Activated CD4-positive, alpha-beta memory T cell treated with anti-CD3 and anti-CD28 coated beads, Interleukin-2, amount 10 ng/mL, durations not matched to agents 7 days and 5 days (primary cell): ENCODE measurements at regions of chr19 and their contacts with region 1.

Region 1: GRCh38 chr19:44723952-44724319 is 24.6 kb upstream of the BCL3 start:
- DNase-seq: peak; percentile 85
- H3K4me3 Mint-ChIP-seq: peak overlapping the region; percentile 18
- H3K27ac Mint-ChIP-seq: no peak overlapping the region
- H3K4me1 Mint-ChIP-seq: peaks cover 58% of the 10 kb centered on the region
- H3K27me3 Mint-ChIP-seq: no peaks in the 10 kb centered on the region

Region 2: DNA sequence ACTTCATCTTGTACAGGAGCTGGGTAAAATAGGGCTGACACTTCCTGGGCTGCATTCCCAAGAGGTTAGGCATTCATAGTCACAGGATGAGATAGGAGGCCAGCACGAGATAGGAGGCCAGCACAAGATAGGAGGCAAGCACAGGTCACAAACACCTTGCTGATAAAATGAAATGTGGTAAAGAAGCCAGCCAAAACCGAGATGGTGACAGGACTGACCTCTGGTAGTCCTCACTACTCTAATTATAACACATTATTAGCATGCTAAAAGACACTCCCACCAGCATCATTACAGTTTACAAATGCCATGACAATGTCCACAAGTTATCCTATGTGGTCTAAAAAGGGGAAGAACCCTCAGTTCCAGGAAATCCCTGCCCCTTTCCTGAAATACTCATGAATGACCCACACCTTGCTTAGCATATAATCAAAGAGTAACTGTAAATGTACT is 131.5 kb before region 1 on chr19:
- CTCF ChIA-PET with region 1: no interaction called
- POLR2A ChIA-PET with region 1: no interaction called
- DNase-seq: no peak
- H3K4me3 Mint-ChIP-seq: no peak overlapping the region
- H3K27ac Mint-ChIP-seq: no peak overlapping the region
- H3K4me1 Mint-ChIP-seq: peaks cover 7% of the 10 kb centered on the region
- H3K27me3 Mint-ChIP-seq: no peaks in the 10 kb centered on the region

Region 3: DNA sequence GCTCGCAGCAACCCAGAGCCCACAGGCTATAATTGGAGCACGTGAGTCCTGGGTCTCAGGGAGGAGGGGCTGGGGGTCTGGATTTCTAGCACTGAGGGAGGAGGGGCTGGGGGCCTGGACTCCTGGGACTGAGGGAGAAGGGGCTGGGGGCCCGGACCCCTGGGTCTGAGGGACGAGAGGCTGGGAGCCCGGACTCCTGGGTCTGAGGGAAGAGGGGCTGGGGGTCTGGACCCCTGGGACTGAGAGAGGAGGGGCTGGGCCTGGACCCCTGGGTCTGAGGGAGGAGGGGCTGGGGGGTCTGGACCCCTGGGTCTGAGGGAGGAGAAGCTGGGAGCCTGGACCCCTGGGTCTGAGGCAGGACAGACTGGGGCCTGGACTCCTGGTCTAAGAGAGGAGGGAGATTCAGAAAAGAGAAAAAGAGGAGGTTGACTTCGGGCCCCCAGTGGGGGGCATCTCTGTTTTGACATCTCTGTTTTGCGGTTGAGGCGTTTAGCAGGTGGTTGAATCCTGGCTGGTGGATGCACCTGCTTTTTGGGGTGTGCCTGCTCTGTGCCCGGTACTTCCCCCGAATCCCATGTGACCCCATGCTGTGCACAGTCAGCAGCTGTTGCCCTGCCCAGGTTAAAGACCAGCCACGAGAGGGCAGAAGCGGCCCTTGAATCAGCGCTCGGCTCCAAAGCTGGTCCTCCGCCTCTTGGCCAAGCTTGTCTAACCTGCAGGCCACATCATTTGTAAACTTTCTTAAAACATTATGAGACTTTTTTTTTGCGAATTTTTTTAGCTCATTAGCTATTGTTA is 69.8 kb before region 1 on chr19:
- CTCF ChIA-PET with region 1: interaction called, 11 read pairs
- POLR2A ChIA-PET with region 1: no interaction called
- DNase-seq: peak; percentile 80
- H3K4me3 Mint-ChIP-seq: no peak overlapping the region
- H3K27ac Mint-ChIP-seq: no peak overlapping the region
- H3K4me1 Mint-ChIP-seq: peaks cover 5% of the 10 kb centered on the region
- H3K27me3 Mint-ChIP-seq: no peaks in the 10 kb centered on the region

Region 4: GRCh38 chr19:44712864-44713515 is 10.9 kb before region 1 on chr19:
- CTCF ChIA-PET with region 1: interaction called, 13 read pairs
- POLR2A ChIA-PET with region 1: interaction called, 4 read pairs
- DNase-seq: no peak
- H3K4me3 Mint-ChIP-seq: no peak overlapping the region
- H3K27ac Mint-ChIP-seq: no peak overlapping the region
- H3K4me1 Mint-ChIP-seq: peaks cover 4% of the 10 kb centered on the region
- H3K27me3 Mint-ChIP-seq: peaks cover 2% of the 10 kb centered on the region

Region 5: DNA sequence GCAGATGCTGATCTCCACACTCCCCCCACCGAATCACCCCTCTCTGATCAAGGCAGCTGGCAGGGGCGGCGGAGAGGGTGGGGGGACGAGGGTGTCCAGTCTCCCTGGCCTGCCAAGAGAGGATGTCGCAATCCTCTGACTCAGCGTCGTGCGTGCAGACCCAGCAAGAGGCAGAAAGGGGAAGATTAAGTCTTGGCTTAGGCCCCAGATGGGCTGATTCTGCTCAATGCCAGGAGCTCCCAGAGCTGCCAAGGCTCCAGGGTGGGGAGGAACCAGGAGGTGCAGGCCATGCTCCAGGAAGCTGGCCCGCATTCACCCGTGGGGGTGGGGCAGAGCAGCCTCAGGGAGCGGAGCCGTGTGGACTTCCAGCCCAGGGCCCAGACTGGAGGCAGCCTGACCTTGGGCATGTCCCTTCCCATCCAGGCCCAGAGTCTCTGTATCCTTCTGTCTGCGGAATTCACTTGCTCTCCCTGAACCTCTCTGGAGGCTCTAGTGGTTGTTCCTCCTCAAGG is 18.0 kb after region 1 on chr19:
- CTCF ChIA-PET with region 1: interaction called, 17 read pairs
- POLR2A ChIA-PET with region 1: interaction called, 4 read pairs
- DNase-seq: peak; percentile 35
- H3K4me3 Mint-ChIP-seq: no peak overlapping the region
- H3K27ac Mint-ChIP-seq: peak overlapping the region; percentile 16
- H3K4me1 Mint-ChIP-seq: peaks cover 47% of the 10 kb centered on the region
- H3K27me3 Mint-ChIP-seq: peaks cover 4% of the 10 kb centered on the region

Region 6: DNA sequence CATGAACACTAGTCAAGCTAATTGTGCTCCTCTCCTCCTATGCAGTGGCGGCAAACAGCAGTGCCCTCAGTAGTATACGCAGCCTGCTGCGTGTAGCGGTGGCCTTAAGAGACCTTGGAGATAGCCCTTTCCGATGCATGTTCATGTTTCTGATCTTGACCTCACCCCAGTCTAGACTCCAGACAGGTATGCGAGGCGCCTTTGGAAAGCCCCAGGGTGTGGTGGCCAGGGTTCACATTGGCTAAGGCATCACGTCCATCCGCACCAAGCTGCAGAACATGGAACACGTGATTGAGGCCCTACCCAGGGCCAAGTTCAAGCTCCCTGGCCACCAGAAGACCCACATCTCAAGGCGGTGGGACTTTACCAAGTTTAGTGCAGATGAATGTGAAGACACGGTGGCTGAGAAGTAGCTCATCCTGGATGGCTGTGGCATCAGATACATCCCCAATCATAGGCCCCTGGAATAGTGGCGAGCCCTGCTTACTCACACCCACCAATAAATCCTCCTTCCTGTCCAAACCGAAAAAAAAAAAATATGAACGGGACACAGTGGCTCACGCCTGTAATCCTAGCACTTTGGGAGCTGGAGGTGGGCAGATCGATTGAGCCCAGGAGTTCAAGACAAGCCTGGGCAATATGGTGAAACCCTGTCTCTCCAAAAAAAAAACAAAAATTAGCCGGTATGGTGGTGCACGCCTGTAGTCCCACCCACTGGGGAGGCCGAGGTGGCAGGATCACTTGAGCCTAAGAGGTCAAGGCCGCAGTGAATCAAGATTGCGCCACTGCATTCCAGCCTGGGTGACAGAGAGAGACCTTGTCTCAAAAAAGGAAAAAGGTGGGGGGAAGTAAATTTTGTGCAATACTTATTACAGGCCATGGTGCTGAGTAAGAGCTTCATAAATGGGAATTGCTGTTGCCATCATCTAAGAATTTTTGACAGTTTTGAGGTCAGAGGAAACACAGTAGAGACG is 41.3 kb after region 1 on chr19:
- CTCF ChIA-PET with region 1: interaction called, 336 read pairs
- POLR2A ChIA-PET with region 1: interaction called, 84 read pairs
- DNase-seq: no peak
- H3K4me3 Mint-ChIP-seq: no peak overlapping the region
- H3K27ac Mint-ChIP-seq: no peak overlapping the region
- H3K4me1 Mint-ChIP-seq: peaks cover 61% of the 10 kb centered on the region
- H3K27me3 Mint-ChIP-seq: peaks cover 2% of the 10 kb centered on the region

Region 7: DNA sequence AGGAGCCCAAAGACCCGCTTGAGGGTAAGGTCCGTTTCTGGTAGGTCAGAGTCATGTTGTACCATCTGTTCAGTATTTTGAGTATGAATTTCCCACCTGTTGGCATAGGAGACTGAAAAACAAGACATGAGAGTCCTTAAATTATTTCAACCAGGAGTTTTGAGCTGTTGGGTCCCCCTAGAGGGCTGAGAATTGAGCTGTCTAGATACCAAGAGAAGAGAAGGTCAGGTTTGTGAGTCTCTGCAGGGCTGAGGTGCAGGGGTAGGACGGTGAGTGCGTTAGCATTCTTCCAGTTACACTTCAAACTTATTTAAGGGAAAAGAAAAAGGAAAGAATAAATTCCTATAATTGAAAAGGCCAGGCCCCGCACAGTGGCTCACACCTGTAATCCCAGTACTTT is 58.8 kb after region 1 on chr19:
- CTCF ChIA-PET with region 1: interaction called, 17 read pairs
- POLR2A ChIA-PET with region 1: no interaction called
- DNase-seq: no peak
- H3K4me3 Mint-ChIP-seq: no peak overlapping the region
- H3K27ac Mint-ChIP-seq: no peak overlapping the region
- H3K4me1 Mint-ChIP-seq: peaks cover 4% of the 10 kb centered on the region
- H3K27me3 Mint-ChIP-seq: no peaks in the 10 kb centered on the region